ENCODE measurements at regions of chr12 and their contacts with region 1.

Region 1: DNA sequence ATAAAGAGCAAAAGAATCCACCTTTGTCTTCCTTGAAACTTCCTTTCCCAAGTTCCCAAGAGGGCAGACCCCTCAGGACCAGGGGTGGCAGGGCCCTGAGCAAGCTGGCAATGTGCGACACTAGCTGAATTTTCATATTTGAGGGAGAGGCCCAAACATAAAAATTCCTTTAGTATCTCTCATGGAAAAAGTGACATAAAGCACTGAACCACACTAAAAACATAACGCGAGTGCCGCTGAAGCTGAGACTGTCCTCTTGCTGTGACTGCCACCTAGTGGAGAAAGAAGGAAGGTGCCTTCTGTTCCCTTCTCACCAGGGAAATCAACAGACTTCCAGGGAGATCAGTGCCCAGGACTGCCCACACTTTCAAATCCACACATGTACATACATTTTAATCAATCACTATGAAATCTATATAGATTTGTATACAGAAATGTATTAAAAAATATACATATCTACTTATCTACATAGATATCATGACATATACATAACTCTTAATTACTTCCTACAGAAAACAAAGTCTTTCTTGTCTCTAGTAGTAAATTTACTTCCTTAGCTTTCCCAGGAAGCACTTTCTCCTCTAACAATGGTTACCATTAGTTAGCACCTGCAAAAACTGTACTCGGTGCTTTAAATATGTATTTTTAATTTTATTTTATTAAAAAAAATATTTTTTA is 53.8 kb downstream of the SSH1 start:
- DNase-seq: peak; percentile 84
- ATAC-seq: peak; percentile 92
- H3K4me3 ChIP-seq: no peak overlapping the region
- H3K4me3 Mint-ChIP-seq: no peak overlapping the region
- H3K27ac ChIP-seq: no peak overlapping the region
- H3K27ac Mint-ChIP-seq: peak overlapping the region; percentile 71
- H3K4me1 ChIP-seq: peaks cover 8 to 11% of the 10 kb centered on the region in 2 donors
- H3K4me1 Mint-ChIP-seq: peaks cover 19% of the 10 kb centered on the region
- H3K27me3 ChIP-seq: no peaks in the 10 kb centered on the region
- H3K27me3 Mint-ChIP-seq: no peaks in the 10 kb centered on the region
- CTCF ChIP-seq: peak; percentile 98

Region 2: DNA sequence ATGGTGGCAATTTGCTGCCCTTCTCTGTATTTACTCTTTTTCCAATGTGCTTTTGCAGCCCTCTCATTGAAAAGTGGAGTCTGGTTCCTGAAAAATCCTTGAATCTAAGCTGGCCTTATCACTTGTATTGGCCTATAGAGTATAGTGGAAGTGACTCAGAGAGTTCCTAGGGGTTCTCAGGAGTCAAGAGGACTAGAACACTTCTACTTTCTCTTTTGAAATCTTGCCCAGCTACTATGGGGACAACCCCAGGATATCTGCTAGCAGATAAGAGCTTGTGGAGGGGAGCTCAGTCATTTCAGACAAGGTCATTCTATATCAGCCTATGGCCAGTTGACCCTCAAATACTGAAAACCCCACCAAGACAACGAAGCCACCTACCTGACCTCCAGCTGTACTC is 701.2 kb before region 1 on chr12:
- CTCF ChIA-PET with region 1: no interaction called
- POLR2A ChIA-PET with region 1: no interaction called
- intact Hi-C with region 1: no loop called
- DNase-seq: no peak
- ATAC-seq: no peak
- H3K4me3 ChIP-seq: no peak overlapping the region
- H3K4me3 Mint-ChIP-seq: no peak overlapping the region
- H3K27ac ChIP-seq: no peak overlapping the region
- H3K27ac Mint-ChIP-seq: no peak overlapping the region
- H3K4me1 ChIP-seq: no peaks in the 10 kb centered on the region
- H3K4me1 Mint-ChIP-seq: no peaks in the 10 kb centered on the region
- H3K27me3 ChIP-seq: no peaks in the 10 kb centered on the region
- H3K27me3 Mint-ChIP-seq: no peaks in the 10 kb centered on the region
- CTCF ChIP-seq: no peak

Region 3: GRCh38 chr12:108576660-108577234 is 226.8 kb before region 1 on chr12:
- CTCF ChIA-PET with region 1: interaction called, 176 read pairs
- POLR2A ChIA-PET with region 1: no interaction called
- intact Hi-C with region 1: no loop called
- DNase-seq: no peak
- ATAC-seq: no peak
- H3K4me3 ChIP-seq: no peak overlapping the region
- H3K4me3 Mint-ChIP-seq: no peak overlapping the region
- H3K27ac ChIP-seq: no peak overlapping the region
- H3K27ac Mint-ChIP-seq: no peak overlapping the region
- H3K4me1 ChIP-seq: peaks cover 21 to 27% of the 10 kb centered on the region in 2 donors
- H3K4me1 Mint-ChIP-seq: peaks cover 51% of the 10 kb centered on the region
- H3K27me3 ChIP-seq: no peaks in the 10 kb centered on the region
- H3K27me3 Mint-ChIP-seq: no peaks in the 10 kb centered on the region
- CTCF ChIP-seq: no peak

Region 4: GRCh38 chr12:108633534-108634248 is 169.9 kb before region 1 on chr12 and contains the start of gene SELPLG:
- CTCF ChIA-PET with region 1: interaction called, 32 read pairs
- POLR2A ChIA-PET with region 1: no interaction called
- intact Hi-C with region 1: no loop called
- DNase-seq: peak; percentile 98
- ATAC-seq: peak; percentile 75
- H3K4me3 ChIP-seq: peak within 1 kb of the TSS; percentile 62 to 87 (median 78)
- H3K4me3 Mint-ChIP-seq: peak within 1 kb of the TSS; percentile 99
- H3K27ac ChIP-seq: peak within 1 kb of the TSS; percentile 92 to 95
- H3K27ac Mint-ChIP-seq: peak within 1 kb of the TSS; percentile 100
- H3K4me1 ChIP-seq: peaks cover 78 to 88% of the 10 kb centered on the region in 2 donors
- H3K4me1 Mint-ChIP-seq: peaks cover 89% of the 10 kb centered on the region
- H3K27me3 ChIP-seq: no peaks in the 10 kb centered on the region
- H3K27me3 Mint-ChIP-seq: no peaks in the 10 kb centered on the region
- CTCF ChIP-seq: peak; percentile 41
- total RNA-seq, gene SELPLG: 6.1 and 6.2 TPM in 2 replicates

Region 5: DNA sequence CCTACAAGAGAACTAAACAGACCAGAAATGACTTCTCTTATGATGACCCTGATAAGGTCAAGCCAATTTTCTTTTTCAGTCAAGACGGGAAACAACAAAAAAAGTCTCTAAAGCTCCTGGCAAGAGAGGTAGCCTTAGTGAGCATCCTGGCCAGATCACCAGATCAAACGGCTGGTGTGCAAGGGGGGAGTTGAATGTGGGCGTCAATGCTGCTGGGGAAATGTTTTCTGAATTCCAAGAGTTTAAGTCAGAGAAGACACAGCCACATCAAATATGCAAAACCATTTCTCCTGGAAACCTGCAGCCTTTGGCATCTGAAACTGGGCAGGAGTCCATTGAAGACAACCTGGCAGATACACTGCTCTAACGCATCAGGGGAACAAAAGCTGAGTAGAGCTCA is 153.9 kb before region 1 on chr12:
- CTCF ChIA-PET with region 1: interaction called, 14 read pairs
- POLR2A ChIA-PET with region 1: interaction called, 3 read pairs
- intact Hi-C with region 1: no loop called
- DNase-seq: no peak
- ATAC-seq: no peak
- H3K4me3 ChIP-seq: no peak overlapping the region
- H3K4me3 Mint-ChIP-seq: no peak overlapping the region
- H3K27ac ChIP-seq: peak overlapping the region in 1 of 2 donors; percentile 4
- H3K27ac Mint-ChIP-seq: peak overlapping the region; percentile 3
- H3K4me1 ChIP-seq: peaks cover 26% of the 10 kb centered on the region in 2 donors
- H3K4me1 Mint-ChIP-seq: peaks cover 55% of the 10 kb centered on the region
- H3K27me3 ChIP-seq: no peaks in the 10 kb centered on the region
- H3K27me3 Mint-ChIP-seq: no peaks in the 10 kb centered on the region
- CTCF ChIP-seq: no peak

Region 6: GRCh38 chr12:108714886-108715285 is 88.7 kb before region 1 on chr12:
- CTCF ChIA-PET with region 1: interaction called, 10 read pairs
- POLR2A ChIA-PET with region 1: no interaction called
- intact Hi-C with region 1: no loop called
- DNase-seq: no peak
- ATAC-seq: no peak
- H3K4me3 ChIP-seq: peak overlapping the region in 1 of 5 experiments; percentile 30
- H3K4me3 Mint-ChIP-seq: no peak overlapping the region
- H3K27ac ChIP-seq: no peak overlapping the region
- H3K27ac Mint-ChIP-seq: peak overlapping the region; percentile 11
- H3K4me1 ChIP-seq: peaks cover 39% of the 10 kb centered on the region in 2 donors
- H3K4me1 Mint-ChIP-seq: peaks cover 54% of the 10 kb centered on the region
- H3K27me3 ChIP-seq: no peaks in the 10 kb centered on the region
- H3K27me3 Mint-ChIP-seq: no peaks in the 10 kb centered on the region
- CTCF ChIP-seq: no peak

Region 7: DNA sequence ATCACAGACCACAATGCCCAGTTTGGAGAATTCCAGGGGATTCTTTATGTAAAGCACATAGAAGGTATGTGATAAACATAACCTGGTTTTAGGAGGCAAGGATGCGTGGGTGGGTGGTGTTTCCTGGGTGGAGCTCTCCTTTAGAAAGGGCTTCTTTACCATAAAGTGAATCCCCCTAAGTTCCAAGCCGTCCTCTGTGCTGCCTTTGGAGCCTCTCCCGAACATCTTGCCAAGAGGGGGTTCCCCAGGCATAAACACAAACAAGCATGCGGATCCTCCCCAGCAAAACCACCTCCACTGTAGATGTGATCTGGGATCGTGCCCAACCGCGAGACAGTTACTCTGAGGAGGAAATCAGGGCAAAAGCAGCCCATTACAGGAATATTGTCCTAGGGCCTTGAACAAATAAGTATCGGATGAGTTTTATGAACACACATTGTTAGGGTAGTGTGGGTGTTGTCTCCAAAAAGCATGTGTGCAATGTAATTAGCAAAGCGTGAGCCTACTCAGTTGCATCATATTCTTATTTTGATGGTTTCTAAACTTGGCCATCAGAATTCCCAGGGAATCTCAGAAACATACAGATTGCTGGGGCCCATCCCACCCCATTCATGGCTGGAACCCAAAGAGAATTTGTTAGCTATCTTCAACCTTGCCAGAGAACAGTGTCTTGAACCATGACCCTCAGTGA is 23.4 kb before region 1 on chr12:
- CTCF ChIA-PET with region 1: no interaction called
- POLR2A ChIA-PET with region 1: no interaction called
- intact Hi-C with region 1: no loop called
- DNase-seq: no peak
- ATAC-seq: no peak
- H3K4me3 ChIP-seq: no peak overlapping the region
- H3K4me3 Mint-ChIP-seq: no peak overlapping the region
- H3K27ac ChIP-seq: no peak overlapping the region
- H3K27ac Mint-ChIP-seq: no peak overlapping the region
- H3K4me1 ChIP-seq: no peaks in the 10 kb centered on the region
- H3K4me1 Mint-ChIP-seq: no peaks in the 10 kb centered on the region
- H3K27me3 ChIP-seq: no peaks in the 10 kb centered on the region
- H3K27me3 Mint-ChIP-seq: no peaks in the 10 kb centered on the region
- CTCF ChIP-seq: no peak

Region 8: GRCh38 chr12:108826101-108826806 is 22.7 kb after region 1 on chr12:
- CTCF ChIA-PET with region 1: interaction called, 14 read pairs
- POLR2A ChIA-PET with region 1: no interaction called
- intact Hi-C with region 1: no loop called
- DNase-seq: no peak
- ATAC-seq: peak; percentile 10
- H3K4me3 ChIP-seq: no peak overlapping the region
- H3K4me3 Mint-ChIP-seq: peak overlapping the region; percentile 80
- H3K27ac ChIP-seq: no peak overlapping the region
- H3K27ac Mint-ChIP-seq: peak overlapping the region; percentile 70
- H3K4me1 ChIP-seq: peaks cover 14 to 33% of the 10 kb centered on the region in 2 donors
- H3K4me1 Mint-ChIP-seq: peaks cover 52% of the 10 kb centered on the region
- H3K27me3 ChIP-seq: no peaks in the 10 kb centered on the region
- H3K27me3 Mint-ChIP-seq: no peaks in the 10 kb centered on the region
- CTCF ChIP-seq: no peak

Region 9: DNA sequence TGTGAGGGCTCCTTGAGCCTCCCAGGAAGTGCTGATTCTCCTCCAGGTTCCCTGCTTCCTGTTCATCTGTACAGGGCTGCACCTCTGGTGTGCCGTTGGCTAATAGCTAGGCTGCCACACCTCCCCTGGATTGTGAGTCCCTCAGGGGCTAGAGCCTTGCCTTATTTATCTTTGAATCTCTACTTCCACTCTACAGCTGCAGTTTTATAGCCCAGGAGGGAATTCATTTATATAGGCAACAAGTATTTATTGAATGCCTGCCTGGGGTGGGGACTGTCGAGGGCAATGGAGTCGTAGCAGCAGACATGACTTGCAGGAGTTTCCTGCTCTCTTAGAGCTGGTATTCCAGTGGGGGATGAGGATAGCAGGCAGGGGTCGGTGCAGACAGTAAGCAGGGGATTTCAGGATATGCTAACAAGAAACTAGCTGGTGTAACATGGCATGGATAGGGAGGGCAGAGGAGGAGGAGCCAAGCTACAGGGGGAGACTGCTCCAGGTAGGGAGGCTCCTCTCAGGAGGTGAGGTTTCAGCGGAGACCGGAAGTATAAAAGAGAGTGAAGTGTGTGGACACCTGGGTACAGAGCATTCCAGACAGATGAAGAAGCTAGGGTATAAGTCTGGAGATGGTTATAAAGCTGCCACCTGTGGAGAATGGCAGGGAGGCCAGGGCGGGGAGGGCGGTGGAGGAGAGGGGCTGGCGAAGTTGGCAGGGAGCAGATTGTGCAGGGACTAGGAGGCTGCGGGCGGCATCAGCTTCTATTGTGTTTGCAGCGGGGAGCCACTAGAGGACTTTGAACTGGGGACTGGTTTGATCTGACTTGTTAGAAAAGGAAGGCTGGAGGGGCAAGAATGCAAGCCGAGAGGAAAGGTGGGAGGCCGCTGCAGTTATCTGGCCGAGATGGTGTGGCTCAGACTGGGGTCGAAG is 266.0 kb after region 1 on chr12:
- CTCF ChIA-PET with region 1: no interaction called
- POLR2A ChIA-PET with region 1: no interaction called
- intact Hi-C with region 1: no loop called
- DNase-seq: no peak
- ATAC-seq: no peak
- H3K4me3 ChIP-seq: no peak overlapping the region
- H3K4me3 Mint-ChIP-seq: no peak overlapping the region
- H3K27ac ChIP-seq: no peak overlapping the region
- H3K27ac Mint-ChIP-seq: no peak overlapping the region
- H3K4me1 ChIP-seq: no peaks in the 10 kb centered on the region
- H3K4me1 Mint-ChIP-seq: no peaks in the 10 kb centered on the region
- H3K27me3 ChIP-seq: no peaks in the 10 kb centered on the region
- H3K27me3 Mint-ChIP-seq: no peaks in the 10 kb centered on the region
- CTCF ChIP-seq: no peak

Region 10: GRCh38 chr12:109093022-109093918 is 289.7 kb after region 1 on chr12 and contains the start of gene ALKBH2:
- CTCF ChIA-PET with region 1: interaction called, 5 read pairs
- POLR2A ChIA-PET with region 1: no interaction called
- intact Hi-C with region 1: loop called (anchors 1 kb)
- DNase-seq: peak; percentile 96
- ATAC-seq: peak; percentile 70
- H3K4me3 ChIP-seq: peak within 1 kb of the TSS; percentile 64 to 98 (median 85)
- H3K4me3 Mint-ChIP-seq: peak within 1 kb of the TSS; percentile 95
- H3K27ac ChIP-seq: peak within 1 kb of the TSS; percentile 58 to 78
- H3K27ac Mint-ChIP-seq: peak within 1 kb of the TSS; percentile 89
- H3K4me1 ChIP-seq: peaks cover 24 to 28% of the 10 kb centered on the region in 2 donors
- H3K4me1 Mint-ChIP-seq: peaks cover 34% of the 10 kb centered on the region
- H3K27me3 ChIP-seq: no peaks in the 10 kb centered on the region
- H3K27me3 Mint-ChIP-seq: no peaks in the 10 kb centered on the region
- CTCF ChIP-seq: peak; percentile 97
- total RNA-seq, gene ALKBH2: 14.5 and 14.6 TPM in 2 replicates